ENCODE measurements at regions of chr15 and their contacts with region 1.

Region 1: DNA sequence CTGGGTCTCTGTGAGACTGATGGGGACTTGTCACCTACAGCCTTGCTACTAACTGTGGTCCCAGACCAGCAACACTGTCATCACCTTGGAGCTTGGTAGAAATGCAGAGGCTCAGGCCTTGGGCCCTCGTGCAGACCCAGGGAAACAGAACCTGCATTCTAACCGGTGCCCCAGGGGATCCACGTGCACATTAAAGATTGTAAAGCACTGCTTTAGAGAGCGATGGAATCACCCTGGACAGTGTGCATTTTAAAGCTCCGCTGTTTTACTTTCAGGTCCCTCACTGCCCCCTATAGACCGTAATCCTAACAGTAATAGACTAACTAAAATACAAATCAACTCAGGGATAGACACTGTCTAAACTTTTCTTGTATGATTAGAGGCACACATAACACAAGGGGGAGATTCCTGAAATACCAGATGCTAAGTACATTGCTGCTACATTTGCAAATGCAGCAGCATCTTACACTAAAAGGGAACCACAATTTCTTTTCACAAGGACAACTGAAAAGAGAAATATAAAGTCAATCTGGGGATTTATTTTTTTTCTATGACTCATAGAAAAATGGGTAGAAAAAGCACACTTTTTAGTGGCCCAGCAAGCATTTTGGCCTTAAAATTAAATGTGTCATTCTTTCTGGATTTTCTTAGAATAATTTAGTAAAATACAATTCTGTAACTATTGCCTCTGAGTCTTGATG is 10.5 kb upstream of the SH3GL3 start:
- DNase-seq: no peak
- H3K4me3 Mint-ChIP-seq: no peak overlapping the region
- H3K27ac Mint-ChIP-seq: no peak overlapping the region
- H3K4me1 Mint-ChIP-seq: no peaks in the 10 kb centered on the region
- H3K27me3 Mint-ChIP-seq: no peaks in the 10 kb centered on the region

Region 2: GRCh38 chr15:83248151-83249029 is 188.2 kb before region 1 on chr15:
- CTCF ChIA-PET with region 1: interaction called, 11 read pairs
- POLR2A ChIA-PET with region 1: no interaction called
- DNase-seq: no peak
- H3K4me3 Mint-ChIP-seq: no peak overlapping the region
- H3K27ac Mint-ChIP-seq: no peak overlapping the region
- H3K4me1 Mint-ChIP-seq: no peaks in the 10 kb centered on the region
- H3K27me3 Mint-ChIP-seq: peaks cover 45% of the 10 kb centered on the region

Region 3: GRCh38 chr15:83559310-83559966 is 122.8 kb after region 1 on chr15:
- CTCF ChIA-PET with region 1: interaction called, 51 read pairs
- POLR2A ChIA-PET with region 1: no interaction called
- DNase-seq: peak; percentile 45
- H3K4me3 Mint-ChIP-seq: no peak overlapping the region
- H3K27ac Mint-ChIP-seq: no peak overlapping the region
- H3K4me1 Mint-ChIP-seq: no peaks in the 10 kb centered on the region
- H3K27me3 Mint-ChIP-seq: peaks cover 2% of the 10 kb centered on the region

Measured in activated CD4-positive, alpha-beta memory T cell treated with anti-CD3 and anti-CD28 coated beads, Interleukin-2, amount 10 ng/mL, durations not matched to agents 7 days and 5 days (primary cell).